Aorta (tissue), 5 donors: ENCODE measurements at regions of chr5 and their contacts with region 1.

Region 1: GRCh38 chr5:10249948-10250803 is at the start of gene CCT5:
- DNase-seq: peak; percentile 96
- ATAC-seq: peak; percentile 96
- H3K4me3 ChIP-seq: peak within 1 kb of the TSS; percentile 78 to 85
- H3K27ac ChIP-seq: peak within 1 kb of the TSS; percentile 32 to 78
- H3K4me1 ChIP-seq: peaks cover 0 to 7% of the 10 kb centered on the region in 2 donors
- H3K27me3 ChIP-seq: no peaks in the 10 kb centered on the region
- total RNA-seq, gene CCT5: 84.4 to 104 TPM

Region 2: GRCh38 chr5:8457187-8458037 is 1792.8 kb before region 1 on chr5:
- intact Hi-C with region 1: loop called in 1 of 2 experiments (anchors 10 kb)
- DNase-seq: peak; percentile 97
- ATAC-seq: peak; percentile 99
- H3K4me3 ChIP-seq: peak overlapping the region; percentile 59 to 73
- H3K27ac ChIP-seq: peak overlapping the region in 1 of 2 donors; percentile 14
- H3K4me1 ChIP-seq: no peaks in the 10 kb centered on the region
- H3K27me3 ChIP-seq: no peaks in the 10 kb centered on the region

Region 3: GRCh38 chr5:9924614-9925013 is 325.6 kb before region 1 on chr5:
- intact Hi-C with region 1: no loop called
- DNase-seq: no peak
- ATAC-seq: no peak
- H3K4me3 ChIP-seq: no peak overlapping the region
- H3K27ac ChIP-seq: no peak overlapping the region
- H3K4me1 ChIP-seq: no peaks in the 10 kb centered on the region
- H3K27me3 ChIP-seq: no peaks in the 10 kb centered on the region